K562 (cell line): ENCODE measurements at regions of chr19 and their contacts with region 1.

Region 1: DNA sequence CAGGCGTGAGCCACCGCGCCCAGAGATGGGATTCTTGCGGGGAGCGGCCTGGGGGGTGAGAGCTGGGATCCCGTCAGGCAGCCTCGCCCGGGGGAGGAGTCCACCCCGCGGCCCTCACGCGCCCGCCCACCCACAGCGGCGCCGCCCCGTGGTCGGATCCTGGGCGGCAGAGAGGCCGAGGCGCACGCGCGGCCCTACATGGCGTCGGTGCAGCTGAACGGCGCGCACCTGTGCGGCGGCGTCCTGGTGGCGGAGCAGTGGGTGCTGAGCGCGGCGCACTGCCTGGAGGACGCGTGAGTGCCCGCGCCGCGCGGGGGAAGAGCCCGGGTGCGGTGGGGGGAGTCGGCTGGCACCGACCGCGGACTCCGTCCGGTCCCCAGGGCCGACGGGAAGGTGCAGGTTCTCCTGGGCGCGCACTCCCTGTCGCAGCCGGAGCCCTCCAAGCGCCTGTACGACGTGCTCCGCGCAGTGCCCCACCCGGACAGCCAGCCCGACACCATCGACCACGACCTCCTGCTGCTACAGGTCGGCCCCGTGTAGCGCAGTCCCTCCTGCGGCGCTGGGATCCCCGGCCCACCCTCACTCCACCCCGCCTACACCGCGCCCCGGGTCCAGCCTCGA is 1.1 kb downstream of the CFD start:
- DNase-seq: peak; percentile 90 to 94 (median 92)
- ATAC-seq: peak; percentile 78
- H3K4me3 ChIP-seq: peak overlapping the region; percentile 62
- H3K27ac ChIP-seq: peak overlapping the region; percentile 82
- H3K4me1 ChIP-seq: peaks cover 25 to 63% of the 10 kb centered on the region in 2 experiments
- H3K27me3 ChIP-seq: no peaks in the 10 kb centered on the region
- CTCF ChIP-seq: peak in 2 of 3 experiments; percentile 45 to 55; a peak in 4 of 6 replicates
- EP300 ChIP-seq: no peak
- POLR2A ChIP-seq: peak; percentile 81
- RAD21 ChIP-seq: peak; percentile 30; a peak in 2 of 4 replicates

Region 2: GRCh38 chr19:913080-913748 is 52.6 kb after region 1 on chr19 and contains the start of gene R3HDM4:
- CTCF ChIA-PET with region 1: interaction called, 9 read pairs
- POLR2A ChIA-PET with region 1: interaction called, 3 read pairs
- in situ Hi-C with region 1: no loop called
- intact Hi-C with region 1: loop called (anchors 1 kb)
- DNase-seq: peak; percentile 69 to 84 (median 76)
- ATAC-seq: peak; percentile 36
- H3K4me3 ChIP-seq: peak within 1 kb of the TSS; percentile 96
- H3K27ac ChIP-seq: peak within 1 kb of the TSS; percentile 91
- H3K4me1 ChIP-seq: peaks cover 13 to 72% of the 10 kb centered on the region in 2 experiments
- H3K27me3 ChIP-seq: no peaks in the 10 kb centered on the region
- CTCF ChIP-seq: no peak
- EP300 ChIP-seq: no peak
- POLR2A ChIP-seq: 0 out of 2 replicates have a peak, but pooled peaks have one; percentile 35
- RAD21 ChIP-seq: no peak
- polyA plus RNA-seq, gene R3HDM4: 3.2 to 5.6 TPM

Region 3: GRCh38 chr19:984165-984967 is 123.8 kb after region 1 on chr19 and contains the start of gene WDR18:
- CTCF ChIA-PET with region 1: interaction called, 4 read pairs
- POLR2A ChIA-PET with region 1: interaction called, 3 read pairs
- in situ Hi-C with region 1: no loop called
- intact Hi-C with region 1: loop called (anchors 5 kb)
- DNase-seq: peak; percentile 94 to 97 (median 95)
- ATAC-seq: peak; percentile 78
- H3K4me3 ChIP-seq: peak within 1 kb of the TSS; percentile 100
- H3K27ac ChIP-seq: peak within 1 kb of the TSS; percentile 91
- H3K4me1 ChIP-seq: peaks cover 24 to 78% of the 10 kb centered on the region in 2 experiments
- H3K27me3 ChIP-seq: no peaks in the 10 kb centered on the region
- CTCF ChIP-seq: no peak
- EP300 ChIP-seq: no peak
- POLR2A ChIP-seq: peak; percentile 78; the same call in 1 of the 2 replicates
- RAD21 ChIP-seq: no peak
- polyA plus RNA-seq, gene WDR18: 0.65 to 1.1 TPM